A549 (cell line): ENCODE measurements at regions of chr7 and their contacts with region 1.

Region 1: GRCh38 chr7:76069238-76069638 is 21.3 kb downstream of the MDH2 start:
- DNase-seq: peak; percentile 84 to 94
- ATAC-seq: peak; percentile 88 to 92
- H3K4me3 ChIP-seq: no peak overlapping the region
- H3K27ac ChIP-seq: peak overlapping the region; percentile 80 to 81
- H3K4me1 ChIP-seq: peaks cover 40% of the 10 kb centered on the region
- CTCF ChIP-seq: peak; percentile 55
- EP300 ChIP-seq: no peak
- POLR2A ChIP-seq: no peak
- RAD21 ChIP-seq: peak; percentile 84 to 85

Region 2: DNA sequence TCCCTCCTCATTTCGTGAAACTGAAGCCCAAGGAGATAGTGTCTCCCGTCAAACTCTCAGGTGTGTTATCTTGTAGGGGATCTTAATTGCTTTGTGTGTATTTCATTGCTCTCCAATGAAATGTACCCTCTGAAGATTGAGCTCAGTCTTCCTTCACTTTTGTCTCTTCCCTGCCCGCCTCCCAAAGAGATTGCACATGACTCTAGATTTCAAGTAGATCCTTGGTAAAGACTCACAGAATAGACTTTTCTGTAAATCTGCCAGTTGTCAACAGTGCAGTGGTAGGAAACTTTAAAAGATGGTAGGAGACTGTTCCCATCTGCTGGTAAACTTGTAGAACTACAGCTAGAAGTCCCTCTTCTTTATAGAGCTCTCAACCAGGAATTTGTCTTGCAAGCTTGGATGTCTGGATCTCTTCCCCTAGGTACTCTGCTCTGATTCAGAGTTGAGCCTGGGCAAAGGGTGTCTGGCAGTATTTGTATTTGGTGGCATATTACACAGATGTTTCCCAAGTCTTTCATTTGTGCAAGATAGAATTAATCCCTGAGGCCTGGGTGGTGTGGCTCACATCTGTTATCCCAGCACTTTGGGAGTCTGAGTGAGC is 306.8 kb before region 1 on chr7:
- CTCF ChIA-PET with region 1: no interaction called
- POLR2A ChIA-PET with region 1: no interaction called
- DNase-seq: peak; percentile 80 to 92
- ATAC-seq: peak; percentile 97 to 99
- H3K4me3 ChIP-seq: no peak overlapping the region
- H3K27ac ChIP-seq: 0 out of 6 replicates have a peak overlapping the region, but pooled peaks have one; percentile 4 to 15
- H3K4me1 ChIP-seq: 0 out of 3 replicates have a peak, but pooled peaks cover 4% of the 10 kb centered on the region
- CTCF ChIP-seq: peak; percentile 84
- EP300 ChIP-seq: no peak
- POLR2A ChIP-seq: no peak
- RAD21 ChIP-seq: peak; percentile 94

Region 3: DNA sequence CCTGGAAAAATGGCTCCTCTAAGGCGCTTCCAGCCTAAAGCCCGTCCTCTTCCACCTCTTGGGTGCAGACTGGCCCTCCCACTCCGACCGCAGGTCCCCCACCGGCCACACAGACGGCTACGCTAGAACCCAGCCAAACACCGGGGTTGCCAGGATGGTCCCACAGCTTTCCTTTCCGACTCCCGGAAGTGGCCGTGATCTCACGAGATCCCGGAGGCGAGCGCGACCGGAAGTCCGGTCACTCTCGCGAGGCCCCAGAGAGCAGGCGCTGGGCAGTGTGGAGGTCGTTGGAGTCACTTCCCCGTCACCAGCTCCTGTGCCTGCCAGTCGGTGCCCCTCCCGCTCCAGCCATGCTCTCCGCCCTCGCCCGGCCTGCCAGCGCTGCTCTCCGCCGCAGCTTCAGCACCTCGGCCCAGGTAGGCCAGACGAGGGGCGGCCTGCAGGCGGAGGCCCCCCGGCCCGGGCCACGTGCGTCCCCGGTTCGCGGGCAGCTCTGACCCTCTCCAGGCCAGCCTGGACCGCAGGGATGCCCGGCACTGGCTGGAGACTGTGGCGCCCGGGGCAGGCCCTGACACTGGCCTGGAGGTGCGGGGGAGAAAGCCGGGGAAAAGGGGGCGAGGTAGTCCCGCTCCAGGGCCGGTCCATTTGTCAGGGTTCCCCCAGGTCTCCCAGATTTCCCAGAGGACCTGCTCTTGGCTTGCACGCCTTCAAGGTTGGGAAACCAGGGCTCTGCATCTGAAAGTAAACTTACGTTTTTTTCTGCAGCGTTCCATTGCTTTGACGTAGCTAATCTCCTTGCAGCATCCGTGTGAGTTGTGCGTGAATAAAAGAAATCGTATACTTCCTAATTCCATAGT is 21.2 kb before region 1 on chr7 and contains the starts of genes MDH2 and STYXL1:
- CTCF ChIA-PET with region 1: interaction called, 24 read pairs
- POLR2A ChIA-PET with region 1: interaction called, 11 read pairs
- DNase-seq: peak; percentile 97 to 98
- ATAC-seq: peak; percentile 98
- H3K4me3 ChIP-seq: peak within 1 kb of the TSS; percentile 98
- H3K27ac ChIP-seq: peak within 1 kb of the TSS; percentile 97 to 98
- H3K4me1 ChIP-seq: peaks cover 25% of the 10 kb centered on the region; the same call in 2 of the 3 replicates
- CTCF ChIP-seq: no peak
- EP300 ChIP-seq: no peak
- POLR2A ChIP-seq: peak; percentile 87
- RAD21 ChIP-seq: no peak; a peak in 1 of 5 replicates
- polyA plus RNA-seq, gene MDH2: 164 and 190 TPM in 2 replicates
- polyA plus RNA-seq, gene STYXL1: 73.8 and 76.8 TPM in 2 replicates

Region 4: DNA sequence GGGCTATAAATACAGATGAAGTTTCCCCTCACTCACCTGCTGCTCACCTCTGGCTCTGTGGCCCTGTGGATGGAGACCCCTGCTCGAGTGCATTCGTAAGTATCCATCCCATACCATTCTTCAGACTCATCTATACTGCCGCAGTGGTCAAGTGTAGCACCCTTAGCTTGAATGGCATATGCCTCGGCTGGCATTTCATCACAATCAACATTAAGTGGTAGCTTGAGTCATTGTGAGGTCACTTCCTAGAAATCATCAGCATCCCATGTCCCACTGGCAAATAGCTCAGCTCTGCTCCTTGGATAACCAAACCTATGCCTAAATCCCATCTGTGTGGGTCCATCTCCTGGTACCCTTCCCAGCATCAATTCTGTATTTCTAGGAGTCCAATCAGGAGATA is 16.8 kb after region 1 on chr7:
- CTCF ChIA-PET with region 1: interaction called, 24 read pairs
- POLR2A ChIA-PET with region 1: interaction called, 5 read pairs
- DNase-seq: no peak
- ATAC-seq: no peak
- H3K4me3 ChIP-seq: no peak overlapping the region
- H3K27ac ChIP-seq: peak overlapping the region; percentile 75 to 92
- H3K4me1 ChIP-seq: peaks cover 71% of the 10 kb centered on the region
- CTCF ChIP-seq: no peak
- EP300 ChIP-seq: no peak
- POLR2A ChIP-seq: no peak
- RAD21 ChIP-seq: no peak

Region 5: DNA sequence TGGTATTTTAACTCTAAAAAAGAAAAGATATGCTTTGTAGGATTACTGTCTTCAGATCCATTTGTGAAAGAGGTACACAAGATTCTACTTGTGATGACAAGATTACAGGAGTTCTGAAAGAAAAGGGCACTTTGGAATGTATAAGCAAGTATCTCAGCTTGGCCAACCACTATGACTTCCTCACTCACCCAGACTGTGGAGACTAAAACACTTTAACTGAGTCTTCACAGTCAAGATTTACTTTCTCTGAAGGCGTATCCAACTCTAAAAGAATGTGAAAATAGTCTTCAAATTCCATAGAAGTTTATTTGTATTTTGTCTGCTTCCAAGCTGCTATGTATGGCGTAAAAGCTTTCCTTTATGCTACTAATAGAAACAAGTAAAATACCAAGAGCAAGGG is 56.3 kb after region 1 on chr7:
- CTCF ChIA-PET with region 1: interaction called, 151 read pairs
- POLR2A ChIA-PET with region 1: interaction called, 3 read pairs
- DNase-seq: no peak
- ATAC-seq: no peak
- H3K4me3 ChIP-seq: no peak overlapping the region
- H3K27ac ChIP-seq: no peak overlapping the region
- H3K4me1 ChIP-seq: peaks cover 21% of the 10 kb centered on the region; the same call in 2 of the 3 replicates
- CTCF ChIP-seq: no peak
- EP300 ChIP-seq: no peak
- POLR2A ChIP-seq: no peak
- RAD21 ChIP-seq: no peak

Region 6: DNA sequence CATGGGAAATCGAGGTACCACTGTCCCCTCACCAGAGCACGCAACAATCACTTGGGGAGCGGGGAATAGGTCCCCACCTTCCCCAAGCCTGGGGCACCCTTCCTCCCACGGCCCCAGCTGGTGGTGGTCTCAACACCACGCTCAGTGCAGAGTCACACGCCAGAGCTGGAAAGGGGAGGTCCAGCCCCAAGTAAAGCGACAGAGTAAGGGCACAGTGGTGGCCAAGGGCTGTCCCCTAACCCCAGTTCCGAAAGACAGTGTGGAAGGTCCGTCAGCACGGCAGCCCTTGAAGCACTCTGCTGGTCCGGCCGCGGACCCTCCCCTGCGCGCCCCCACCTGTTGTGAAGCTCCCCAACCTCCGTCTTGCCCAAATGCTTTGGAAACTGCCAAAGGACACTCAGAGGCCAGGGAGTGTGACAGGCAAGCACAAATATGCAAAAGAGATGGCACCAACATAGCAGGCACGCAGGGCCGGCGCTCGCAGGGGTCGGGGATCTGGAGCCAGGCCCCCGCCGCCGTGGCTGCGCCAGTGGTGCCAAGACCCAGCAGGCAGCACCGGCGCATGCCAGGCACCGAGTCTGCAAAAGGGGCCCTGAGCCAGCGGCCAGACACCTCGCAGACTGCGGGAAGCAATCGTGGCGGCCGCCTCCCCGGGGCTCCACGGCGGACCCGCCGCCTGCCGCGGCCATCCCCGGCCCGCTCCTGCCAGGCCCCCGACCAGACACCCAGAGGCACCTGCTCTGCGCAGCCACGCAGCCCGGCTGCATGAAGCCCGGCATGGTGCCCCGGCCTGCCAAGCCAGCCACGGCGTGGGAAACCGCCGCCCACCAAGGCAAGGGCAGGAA is 80.8 kb after region 1 on chr7:
- CTCF ChIA-PET with region 1: interaction called, 4 read pairs
- POLR2A ChIA-PET with region 1: interaction called, 10 read pairs
- DNase-seq: no peak
- ATAC-seq: no peak
- H3K4me3 ChIP-seq: no peak overlapping the region
- H3K27ac ChIP-seq: no peak overlapping the region
- H3K4me1 ChIP-seq: no peaks in the 10 kb centered on the region
- CTCF ChIP-seq: no peak
- EP300 ChIP-seq: no peak
- POLR2A ChIP-seq: no peak
- RAD21 ChIP-seq: no peak